Activated T-helper 1 cell treated with anti-CD3 and anti-CD28 coated beads, Interleukin-12 subunit alpha, Interleukin-12 subunit beta, Interleukin-2, Interleukin-4 antibody, amounts not matched to agents 30 ng/mL and 10 ng/mL and 1 ng/mL, durations not matched to agents 14 hours and 24 hours and 36 hours (primary cell): ENCODE measurements at regions of chr4 and their contacts with region 1.

Region 1: DNA sequence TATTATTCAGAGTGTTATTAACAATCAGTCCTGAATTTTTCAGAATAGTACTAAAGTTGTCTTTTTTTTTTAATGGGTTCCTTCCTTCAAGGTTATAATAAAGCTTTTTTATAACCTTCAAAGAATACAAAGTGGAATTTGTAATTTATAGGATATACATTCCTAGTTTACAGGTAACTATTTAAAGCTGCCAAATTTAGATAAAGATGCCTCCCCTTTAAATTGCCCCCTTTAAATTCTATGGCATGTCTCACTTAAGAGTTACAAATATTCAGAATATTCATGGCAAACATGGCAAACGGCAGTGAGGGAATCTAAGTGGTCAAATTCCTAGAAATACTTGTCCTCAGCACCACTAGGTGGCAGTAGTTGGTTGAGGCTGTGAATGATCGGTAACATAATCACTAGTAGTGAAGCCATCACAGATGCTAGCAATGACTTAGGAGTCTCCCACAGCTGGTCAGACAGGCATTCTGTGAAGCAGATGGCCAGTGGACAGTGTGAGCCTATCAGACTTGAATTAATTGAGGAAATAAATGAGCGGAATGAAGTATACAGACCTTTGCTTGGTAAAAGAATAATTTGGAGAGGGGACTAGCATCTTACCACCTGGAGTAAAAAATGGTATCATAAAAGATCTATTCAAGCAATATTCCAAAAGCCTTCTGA is 86.4 kb downstream of the CBR4 start:
- DNase-seq: peak; percentile 17
- H3K4me3 Mint-ChIP-seq: no peak overlapping the region
- H3K27ac Mint-ChIP-seq: no peak overlapping the region
- H3K4me1 Mint-ChIP-seq: peaks cover 5% of the 10 kb centered on the region
- H3K27me3 Mint-ChIP-seq: no peaks in the 10 kb centered on the region

Region 2: GRCh38 chr4:168585168-168586091 is 338.2 kb before region 1 on chr4:
- intact Hi-C with region 1: loop called (anchors 2 kb)
- DNase-seq: no peak
- H3K4me3 Mint-ChIP-seq: no peak overlapping the region
- H3K27ac Mint-ChIP-seq: no peak overlapping the region
- H3K4me1 Mint-ChIP-seq: peaks cover 5% of the 10 kb centered on the region
- H3K27me3 Mint-ChIP-seq: peaks cover 19% of the 10 kb centered on the region

Region 3: GRCh38 chr4:169492438-169493163 is 568.9 kb after region 1 on chr4:
- intact Hi-C with region 1: loop called (anchors 1 kb)
- DNase-seq: peak; percentile 17
- H3K4me3 Mint-ChIP-seq: no peak overlapping the region
- H3K27ac Mint-ChIP-seq: no peak overlapping the region
- H3K4me1 Mint-ChIP-seq: no peaks in the 10 kb centered on the region
- H3K27me3 Mint-ChIP-seq: no peaks in the 10 kb centered on the region

Region 4: GRCh38 chr4:169566021-169566818 is 642.6 kb after region 1 on chr4:
- intact Hi-C with region 1: loop called (anchors 1 kb)
- DNase-seq: no peak
- H3K4me3 Mint-ChIP-seq: no peak overlapping the region
- H3K27ac Mint-ChIP-seq: no peak overlapping the region
- H3K4me1 Mint-ChIP-seq: peaks cover 9% of the 10 kb centered on the region
- H3K27me3 Mint-ChIP-seq: no peaks in the 10 kb centered on the region